PC-9 (cell line): ENCODE measurements at regions of chr14 and their contacts with region 1.

Region 1: DNA sequence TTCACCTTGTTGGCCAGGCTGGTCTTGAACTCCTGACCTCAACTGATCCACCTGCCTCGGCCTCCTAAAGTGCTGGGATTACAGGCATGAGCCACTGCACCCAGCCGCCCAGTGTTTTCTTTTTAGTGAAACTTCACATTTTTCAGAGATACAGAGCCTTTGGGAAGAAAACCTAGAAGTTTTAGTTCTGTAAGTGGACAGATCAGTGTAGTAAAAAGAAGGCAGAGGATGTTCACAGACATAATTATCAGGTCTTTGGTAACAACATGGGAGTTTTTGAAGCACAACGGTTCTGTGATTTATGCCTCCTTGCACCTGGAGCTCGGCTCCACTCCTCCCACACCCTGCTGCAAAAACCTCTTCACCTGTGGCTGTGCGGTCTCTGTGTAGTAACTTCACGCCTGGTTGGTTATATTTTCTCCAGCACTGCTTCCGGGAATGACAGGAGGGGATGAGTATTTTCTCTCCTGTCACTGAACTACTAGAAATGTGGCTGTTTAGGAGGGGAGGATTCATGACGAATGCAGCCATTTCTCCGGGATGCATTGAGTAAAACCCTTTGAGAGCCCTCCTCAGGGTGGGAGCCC is 67.0 kb downstream of the ARF6 start:
- DNase-seq: peak; percentile 70 to 88
- H3K4me3 ChIP-seq: no peak overlapping the region
- H3K27ac ChIP-seq: peak overlapping the region; percentile 88
- H3K4me1 ChIP-seq: peaks cover 53% of the 10 kb centered on the region
- H3K27me3 ChIP-seq: no peaks in the 10 kb centered on the region
- CTCF ChIP-seq: no peak

Region 2: GRCh38 chr14:49438256-49438770 is 521.6 kb before region 1 on chr14:
- CTCF ChIA-PET with region 1: no interaction called
- POLR2A ChIA-PET with region 1: no interaction called
- intact Hi-C with region 1: no loop called
- DNase-seq: no peak
- H3K4me3 ChIP-seq: no peak overlapping the region
- H3K27ac ChIP-seq: no peak overlapping the region
- H3K4me1 ChIP-seq: no peaks in the 10 kb centered on the region
- H3K27me3 ChIP-seq: peaks cover 3% of the 10 kb centered on the region; the same call in 1 of the 2 replicates
- CTCF ChIP-seq: no peak

Region 3: GRCh38 chr14:49897968-49898367 is 61.9 kb before region 1 on chr14:
- CTCF ChIA-PET with region 1: no interaction called
- POLR2A ChIA-PET with region 1: interaction called, 3 read pairs
- intact Hi-C with region 1: loop called (anchors 2 kb)
- DNase-seq: peak in 1 of 2 experiments; percentile 62
- H3K4me3 ChIP-seq: peak overlapping the region; percentile 99; the same call in 1 of the 2 replicates
- H3K27ac ChIP-seq: peak overlapping the region; percentile 96
- H3K4me1 ChIP-seq: peaks cover 29% of the 10 kb centered on the region
- H3K27me3 ChIP-seq: no peaks in the 10 kb centered on the region
- CTCF ChIP-seq: no peak

Region 4: GRCh38 chr14:49971156-49972130 is 11.5 kb after region 1 on chr14:
- CTCF ChIA-PET with region 1: interaction called, 3 read pairs
- POLR2A ChIA-PET with region 1: interaction called, 12 read pairs
- intact Hi-C with region 1: loop called (anchors 1 kb)
- DNase-seq: no peak
- H3K4me3 ChIP-seq: peak overlapping the region; percentile 40; the same call in 1 of the 2 replicates
- H3K27ac ChIP-seq: peak overlapping the region; percentile 97
- H3K4me1 ChIP-seq: peaks cover 81% of the 10 kb centered on the region
- H3K27me3 ChIP-seq: no peaks in the 10 kb centered on the region
- CTCF ChIP-seq: no peak

Region 5: GRCh38 chr14:50008562-50009350 is 48.8 kb after region 1 on chr14:
- CTCF ChIA-PET with region 1: no interaction called
- POLR2A ChIA-PET with region 1: interaction called, 28 read pairs
- intact Hi-C with region 1: no loop called
- DNase-seq: peak; percentile 81 to 98
- H3K4me3 ChIP-seq: peak overlapping the region; percentile 58
- H3K27ac ChIP-seq: peak overlapping the region; percentile 100
- H3K4me1 ChIP-seq: peaks cover 78% of the 10 kb centered on the region
- H3K27me3 ChIP-seq: no peaks in the 10 kb centered on the region
- CTCF ChIP-seq: no peak

Region 6: DNA sequence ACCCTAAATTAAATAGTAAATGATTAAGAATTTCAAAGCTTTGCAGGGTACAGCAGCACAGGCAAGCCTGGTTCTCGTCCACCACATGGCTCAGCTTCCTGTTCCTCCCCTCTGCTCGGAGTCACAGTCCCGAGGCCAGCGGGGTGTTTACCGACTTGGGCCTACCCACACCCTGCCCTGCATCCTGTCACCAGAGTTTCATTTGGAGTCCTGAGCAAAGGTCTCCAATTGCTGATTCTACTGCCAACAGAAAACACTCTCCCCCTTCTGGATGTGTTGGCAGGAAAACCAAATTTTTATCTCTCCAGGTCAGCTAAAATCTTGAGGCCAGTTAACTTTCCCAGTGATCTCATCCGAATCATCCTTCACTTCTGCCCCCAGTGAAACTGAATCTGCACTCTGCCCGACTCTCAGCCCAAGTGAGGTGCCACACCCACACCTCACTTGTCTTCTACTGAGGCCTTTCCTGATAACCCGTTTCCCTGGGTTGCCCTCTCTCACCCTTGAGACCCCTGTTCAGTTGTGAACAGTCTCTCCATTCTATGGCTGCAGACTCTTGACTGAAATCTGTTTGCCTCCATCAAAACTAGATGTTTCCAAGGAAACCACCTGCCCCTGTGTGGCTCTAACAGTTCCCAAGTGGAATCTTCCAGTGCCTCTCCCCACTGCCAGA is 85.3 kb after region 1 on chr14:
- CTCF ChIA-PET with region 1: no interaction called
- POLR2A ChIA-PET with region 1: no interaction called
- intact Hi-C with region 1: loop called (anchors 5 kb)
- DNase-seq: peak; percentile 63 to 89
- H3K4me3 ChIP-seq: no peak overlapping the region
- H3K27ac ChIP-seq: peak overlapping the region; percentile 99
- H3K4me1 ChIP-seq: peaks cover 81% of the 10 kb centered on the region
- H3K27me3 ChIP-seq: no peaks in the 10 kb centered on the region
- CTCF ChIP-seq: no peak